Naive thymus-derived CD4-positive, alpha-beta T cell (primary cell): ENCODE measurements at regions of chr17 and their contacts with region 1.

Region 1: DNA sequence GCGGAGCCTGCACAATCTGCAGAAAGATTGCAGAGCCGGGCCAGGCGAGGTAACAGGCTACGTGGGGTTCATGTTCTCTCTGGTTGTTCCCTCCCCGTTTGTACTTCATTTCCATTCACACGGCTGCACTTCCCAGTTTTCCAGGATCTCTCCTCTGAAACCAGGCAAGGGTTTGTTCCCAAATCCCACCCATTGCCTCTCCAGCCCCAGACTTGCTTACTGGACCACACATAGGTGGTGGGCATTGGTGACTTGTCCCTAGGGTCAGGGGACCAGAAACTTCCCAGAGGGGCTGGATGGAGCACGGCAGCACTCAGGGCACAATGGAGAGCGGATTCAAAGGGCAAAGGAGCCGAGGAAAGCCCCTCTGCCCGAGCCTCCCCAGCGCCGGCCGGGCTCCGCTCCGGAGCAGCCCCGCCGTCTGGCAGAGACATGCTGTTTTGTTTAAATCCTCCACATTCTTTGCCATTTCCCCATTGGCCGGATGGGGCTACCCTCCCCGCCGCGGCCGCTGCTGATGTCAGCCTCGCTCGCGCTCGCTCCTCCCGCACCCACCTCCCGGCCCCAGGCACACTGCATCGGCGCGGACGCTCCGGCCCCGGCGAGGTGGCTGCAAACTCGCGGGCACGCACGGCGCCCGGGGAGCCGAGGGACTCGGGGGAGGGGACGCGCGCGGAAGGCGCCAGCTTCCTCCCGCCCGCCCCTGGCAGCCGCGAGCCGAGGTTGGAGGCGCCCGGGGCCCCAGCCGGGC is at the start of gene PITPNC1:
- DNase-seq: peak; percentile 79 to 89 (median 88)
- ATAC-seq: peak; percentile 82
- H3K4me3 ChIP-seq: peak within 1 kb of the TSS; percentile 92
- H3K4me3 Mint-ChIP-seq: peak within 1 kb of the TSS; percentile 86 to 99 (median 93)
- H3K27ac ChIP-seq: peak within 1 kb of the TSS; percentile 86
- H3K27ac Mint-ChIP-seq: peak within 1 kb of the TSS; percentile 84 to 98 (median 92)
- H3K4me1 ChIP-seq: peaks cover 17 to 33% of the 10 kb centered on the region in 2 donors
- H3K4me1 Mint-ChIP-seq: peaks cover 26 to 49% (median 38%) of the 10 kb centered on the region in 7 donors
- H3K27me3 ChIP-seq: no peaks in the 10 kb centered on the region
- H3K27me3 Mint-ChIP-seq: no peaks in the 10 kb centered on the region
- total RNA-seq, gene PITPNC1: 53.1 to 108 (median 99.6) TPM

Region 2: GRCh38 chr17:67366193-67367157 is 10.4 kb before region 1 on chr17 and contains the start of gene PSMD12:
- CTCF ChIA-PET with region 1: interaction called, 7 read pairs
- POLR2A ChIA-PET with region 1: interaction called, 19 read pairs
- intact Hi-C with region 1: loop called (anchors 1 kb)
- DNase-seq: peak; percentile 86 to 96 (median 93)
- ATAC-seq: peak; percentile 99
- H3K4me3 ChIP-seq: peak within 1 kb of the TSS; percentile 76
- H3K4me3 Mint-ChIP-seq: peak within 1 kb of the TSS; percentile 91 to 99 (median 96)
- H3K27ac ChIP-seq: peak within 1 kb of the TSS; percentile 89
- H3K27ac Mint-ChIP-seq: peak within 1 kb of the TSS; percentile 82 to 99 (median 96)
- H3K4me1 ChIP-seq: peaks cover 22 to 25% of the 10 kb centered on the region in 2 donors
- H3K4me1 Mint-ChIP-seq: peaks cover 32 to 51% (median 47%) of the 10 kb centered on the region in 7 donors
- H3K27me3 ChIP-seq: no peaks in the 10 kb centered on the region
- H3K27me3 Mint-ChIP-seq: no peaks in the 10 kb centered on the region
- total RNA-seq, gene PSMD12: 35.8 to 54.4 (median 40.5) TPM

Region 3: GRCh38 chr17:67431249-67432048 is 54.5 kb after region 1 on chr17:
- CTCF ChIA-PET with region 1: interaction called, 4 read pairs
- POLR2A ChIA-PET with region 1: interaction called, 14 read pairs
- intact Hi-C with region 1: loop called (anchors 1 to 2 kb)
- DNase-seq: no peak
- ATAC-seq: peak; percentile 18
- H3K4me3 ChIP-seq: no peak overlapping the region
- H3K4me3 Mint-ChIP-seq: peak overlapping the region in 9 of 10 donors; percentile 8 to 80 (median 26)
- H3K27ac ChIP-seq: peak overlapping the region; percentile 43
- H3K27ac Mint-ChIP-seq: peak overlapping the region; percentile 12 to 100 (median 85)
- H3K4me1 ChIP-seq: peaks cover 41 to 50% of the 10 kb centered on the region in 2 donors
- H3K4me1 Mint-ChIP-seq: peaks cover 27 to 93% (median 75%) of the 10 kb centered on the region in 7 donors
- H3K27me3 ChIP-seq: no peaks in the 10 kb centered on the region
- H3K27me3 Mint-ChIP-seq: no peaks in the 10 kb centered on the region

Region 4: DNA sequence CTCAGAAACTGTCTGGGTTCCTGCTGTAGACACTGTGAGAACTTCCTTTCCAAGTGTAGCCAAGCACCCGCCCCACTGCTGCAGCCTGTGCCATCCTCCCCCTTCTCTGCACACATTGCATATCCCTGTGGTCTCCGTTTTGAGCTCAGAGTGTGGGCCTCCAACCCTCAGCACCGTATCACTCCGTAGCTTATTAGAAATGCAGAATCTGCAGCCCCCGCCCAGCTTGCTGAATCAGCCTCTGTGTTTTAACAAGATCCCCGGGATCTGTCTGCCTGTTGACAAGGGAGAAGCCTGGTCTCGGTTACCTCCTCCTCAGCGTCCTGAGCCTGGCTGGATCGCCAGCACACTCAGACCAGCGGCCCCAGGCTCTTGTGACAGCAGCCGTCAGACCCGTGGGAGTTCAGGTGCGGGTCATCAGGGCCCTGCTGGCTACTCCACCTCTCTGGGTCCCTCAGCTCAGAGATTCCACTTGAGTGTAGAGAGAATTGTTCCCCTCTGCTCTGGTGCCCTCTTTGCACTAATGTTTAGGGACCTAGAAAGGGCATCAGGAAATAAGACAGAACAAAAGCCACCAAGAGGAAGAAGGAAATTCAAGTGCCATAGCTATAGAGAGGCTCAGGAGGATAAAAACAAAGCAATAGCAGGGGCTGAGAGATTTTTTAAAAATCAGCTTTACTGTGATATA is 92.4 kb after region 1 on chr17:
- CTCF ChIA-PET with region 1: interaction called, 180 read pairs
- POLR2A ChIA-PET with region 1: interaction called, 176 read pairs
- intact Hi-C with region 1: no loop called
- DNase-seq: peak in 2 of 9 donors; percentile 28 to 57
- ATAC-seq: peak; percentile 58
- H3K4me3 ChIP-seq: peak overlapping the region; percentile 53
- H3K4me3 Mint-ChIP-seq: peak overlapping the region; percentile 66 to 90 (median 82)
- H3K27ac ChIP-seq: peak overlapping the region; percentile 74
- H3K27ac Mint-ChIP-seq: peak overlapping the region; percentile 82 to 97 (median 92)
- H3K4me1 ChIP-seq: peaks cover 32 to 63% of the 10 kb centered on the region in 2 donors
- H3K4me1 Mint-ChIP-seq: peaks cover 39 to 84% (median 65%) of the 10 kb centered on the region in 7 donors
- H3K27me3 ChIP-seq: no peaks in the 10 kb centered on the region
- H3K27me3 Mint-ChIP-seq: no peaks in the 10 kb centered on the region

Region 5: DNA sequence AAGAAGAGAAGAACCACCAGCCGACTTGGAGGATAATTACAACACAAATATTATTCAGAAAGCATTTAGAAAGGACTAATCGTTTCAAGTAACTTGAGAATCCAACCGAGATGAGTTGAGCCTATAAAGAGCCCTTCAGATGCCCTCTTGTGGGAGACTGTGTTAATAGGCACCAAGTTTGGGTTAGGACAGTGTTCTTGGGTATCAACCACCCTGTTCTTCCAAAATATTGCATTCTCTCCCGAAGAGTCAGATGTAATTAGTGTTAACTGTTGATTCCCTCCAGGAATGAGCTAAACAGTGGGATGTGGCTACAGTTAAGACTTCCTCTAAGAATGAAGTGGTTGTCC is 253.0 kb after region 1 on chr17:
- CTCF ChIA-PET with region 1: interaction called, 19 read pairs
- POLR2A ChIA-PET with region 1: interaction called, 3 read pairs
- intact Hi-C with region 1: loop called (anchors 1 kb)
- DNase-seq: peak in 6 of 9 donors; percentile 4 to 38 (median 24)
- ATAC-seq: peak; percentile 45
- H3K4me3 ChIP-seq: no peak overlapping the region
- H3K4me3 Mint-ChIP-seq: no peak overlapping the region
- H3K27ac ChIP-seq: no peak overlapping the region
- H3K27ac Mint-ChIP-seq: peak overlapping the region in 3 of 9 donors; percentile 22 to 59 (median 42)
- H3K4me1 ChIP-seq: no peaks in the 10 kb centered on the region
- H3K4me1 Mint-ChIP-seq: peaks cover 5 to 17% (median 13%) of the 10 kb centered on the region in 7 donors
- H3K27me3 ChIP-seq: no peaks in the 10 kb centered on the region
- H3K27me3 Mint-ChIP-seq: no peaks in the 10 kb centered on the region

Region 6: DNA sequence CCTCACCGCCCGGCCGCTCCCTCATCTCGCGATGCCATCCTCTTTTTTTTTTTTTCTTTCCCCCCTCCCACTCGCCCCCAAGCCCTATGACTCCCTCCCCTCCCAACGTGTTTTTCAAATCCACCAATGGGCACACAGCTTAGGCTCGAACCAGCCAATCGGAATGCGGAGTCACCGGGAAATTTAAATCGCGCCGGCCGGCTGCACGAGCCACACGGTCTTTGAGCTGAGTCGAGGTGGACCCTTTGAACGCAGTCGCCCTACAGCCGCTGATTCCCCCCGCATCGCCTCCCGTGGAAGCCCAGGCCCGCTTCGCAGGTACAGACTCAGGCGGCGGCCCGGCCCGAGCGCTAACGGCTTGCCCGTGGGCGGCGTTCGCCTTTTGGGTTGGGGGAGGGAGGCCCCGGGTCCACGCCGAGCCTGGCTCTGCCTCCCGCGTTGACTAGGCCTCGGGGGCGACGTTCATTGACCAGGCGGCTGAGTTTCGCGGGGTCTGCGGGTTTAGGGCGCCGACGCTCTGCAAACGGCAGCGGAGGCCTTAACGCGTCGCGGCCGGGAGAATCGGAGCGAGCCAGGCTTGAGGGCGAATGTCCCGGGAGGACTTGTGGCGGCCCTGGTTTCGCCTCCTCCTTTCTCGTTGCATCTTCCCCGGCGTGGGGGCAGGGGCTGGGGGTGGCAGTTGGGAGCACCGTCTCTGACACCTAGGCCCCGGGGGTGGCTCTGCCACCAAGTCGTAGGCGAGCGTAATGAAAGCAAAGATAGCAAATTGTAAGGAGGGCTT is 658.8 kb after region 1 on chr17 and contains the start of gene KPNA2:
- CTCF ChIA-PET with region 1: no interaction called
- POLR2A ChIA-PET with region 1: no interaction called
- intact Hi-C with region 1: loop called in 1 of 2 experiments (anchors 5 kb)
- DNase-seq: peak; percentile 70 to 95 (median 91)
- ATAC-seq: peak; percentile 94
- H3K4me3 ChIP-seq: peak within 1 kb of the TSS; percentile 71
- H3K4me3 Mint-ChIP-seq: peak within 1 kb of the TSS; percentile 83 to 97 (median 91)
- H3K27ac ChIP-seq: peak within 1 kb of the TSS; percentile 91
- H3K27ac Mint-ChIP-seq: peak within 1 kb of the TSS; percentile 83 to 97 (median 92)
- H3K4me1 ChIP-seq: peaks cover 8 to 16% of the 10 kb centered on the region in 2 donors
- H3K4me1 Mint-ChIP-seq: peaks cover 6 to 32% (median 15%) of the 10 kb centered on the region in 7 donors
- H3K27me3 ChIP-seq: no peaks in the 10 kb centered on the region
- H3K27me3 Mint-ChIP-seq: peaks cover 0 to 3% (median 0%) of the 10 kb centered on the region in 5 donors
- total RNA-seq, gene KPNA2: 8.4 to 161 (median 45.9) TPM